AG04450 (cell line): ENCODE measurements at regions of chr7 and their contacts with region 1.

Region 1: DNA sequence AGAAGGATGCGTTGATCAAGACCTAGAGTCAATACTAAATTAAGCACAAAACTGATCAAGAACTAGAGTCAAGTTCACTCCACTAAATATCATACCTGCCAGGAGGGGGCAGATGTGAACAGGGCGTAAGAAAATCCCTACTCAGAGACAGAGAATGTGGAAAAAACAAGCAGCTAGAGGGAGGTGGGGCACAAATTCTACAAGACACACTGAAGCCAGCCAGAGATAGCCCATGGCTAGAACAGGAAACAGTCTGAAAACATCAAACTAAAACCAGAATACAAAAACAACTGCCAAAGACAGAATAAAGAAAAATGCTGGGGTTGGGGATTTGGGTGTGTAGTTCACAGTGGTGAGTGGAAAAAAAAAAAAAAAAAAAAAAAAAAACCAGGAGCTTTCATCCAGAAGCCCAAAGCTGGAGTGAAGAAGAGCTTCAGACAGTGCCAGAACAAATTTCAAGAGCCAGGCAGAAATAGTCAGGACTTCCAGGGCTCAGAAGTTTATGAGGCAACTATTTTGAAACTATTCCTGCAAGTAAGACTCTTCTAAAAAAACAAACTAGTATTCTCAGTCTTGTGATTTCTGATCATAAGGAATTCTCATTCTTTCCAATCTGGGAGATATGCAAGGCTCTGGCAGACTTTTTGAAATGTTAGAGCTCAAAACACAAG is 118.3 kb downstream of the CCDC71L start:
- DNase-seq: peak; percentile 80
- H3K4me3 ChIP-seq: no peak overlapping the region
- H3K27ac ChIP-seq: peak overlapping the region; percentile 79
- H3K27me3 ChIP-seq: no peaks in the 10 kb centered on the region
- CTCF ChIP-seq: peak; percentile 78

Region 2: DNA sequence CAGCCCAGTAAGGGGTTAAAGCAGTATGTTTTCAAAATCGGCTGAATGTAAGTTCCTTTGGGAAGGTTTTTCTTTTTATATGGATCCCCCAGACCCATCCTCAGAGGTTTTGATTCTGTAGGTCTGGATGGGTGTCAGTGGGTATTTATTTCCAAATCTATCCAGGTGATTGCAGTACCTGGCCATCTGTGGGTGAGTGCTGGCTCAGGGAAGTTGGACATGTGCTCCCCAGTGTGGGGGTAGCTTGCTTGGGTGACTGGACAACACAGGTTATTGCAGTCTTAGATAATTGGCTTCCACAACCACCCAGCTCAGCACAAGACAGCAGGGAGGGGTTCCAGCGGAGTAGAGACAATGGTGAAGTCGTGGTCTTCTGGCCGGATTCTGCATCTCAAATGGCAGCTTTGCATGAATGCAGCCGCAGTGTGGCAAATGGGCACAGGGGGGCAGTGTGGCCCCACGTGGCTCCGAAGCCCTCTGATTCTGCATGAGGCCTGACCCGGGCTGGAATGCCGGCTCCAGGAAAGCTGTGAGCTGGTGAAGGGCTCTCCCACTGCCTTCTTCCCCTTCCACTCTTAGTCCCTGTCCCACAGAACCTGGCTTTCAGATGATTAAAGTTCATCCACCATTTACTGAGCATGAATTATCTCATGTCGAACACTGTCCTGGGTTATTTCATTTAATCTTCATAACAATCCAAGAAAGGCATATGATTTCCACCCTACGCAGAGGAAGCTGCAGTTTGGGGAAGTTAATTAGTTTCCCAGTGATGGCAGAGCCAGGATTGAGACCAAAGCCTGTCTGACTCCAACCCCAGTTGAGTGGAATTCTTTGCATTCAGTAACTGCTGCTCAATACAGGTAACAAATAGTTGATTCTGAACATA is 366.0 kb before region 1 on chr7:
- CTCF ChIA-PET with region 1: interaction called, 31 read pairs
- POLR2A ChIA-PET with region 1: no interaction called
- DNase-seq: peak; percentile 46
- H3K4me3 ChIP-seq: no peak overlapping the region
- H3K27ac ChIP-seq: no peak overlapping the region
- H3K27me3 ChIP-seq: peaks cover 4% of the 10 kb centered on the region
- CTCF ChIP-seq: peak; percentile 96

Region 3: DNA sequence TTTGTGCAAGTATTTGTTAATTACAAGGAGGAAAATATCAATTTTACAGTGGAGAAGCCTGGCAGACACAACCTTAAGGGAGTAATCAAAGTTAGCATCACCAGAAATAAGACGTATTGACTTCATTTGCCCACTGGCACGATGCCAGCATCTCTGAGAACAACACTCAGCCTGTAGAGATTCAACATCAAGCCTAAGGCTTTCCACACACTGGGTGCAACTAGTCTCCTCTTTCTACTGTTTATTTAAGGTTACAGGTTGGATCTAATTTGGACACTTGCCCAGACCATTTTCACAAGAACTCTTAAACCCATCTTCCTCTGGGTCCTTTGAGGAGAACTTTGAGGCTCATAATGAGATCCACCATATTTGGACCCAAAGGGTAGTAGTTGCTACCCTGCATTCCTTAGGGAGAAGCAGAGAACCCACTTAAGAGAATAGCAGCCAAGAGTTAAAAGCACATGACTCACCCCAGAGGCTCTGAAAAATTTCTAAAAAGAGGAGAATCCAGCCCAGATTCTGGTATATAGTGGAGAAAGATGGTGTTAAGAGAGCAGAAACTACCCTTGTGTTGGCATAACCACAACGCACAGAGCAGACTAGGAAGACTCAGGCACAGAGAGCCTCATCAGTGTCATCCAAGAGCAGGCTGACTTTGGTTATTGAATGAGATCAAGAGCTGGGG is 20.9 kb after region 1 on chr7:
- CTCF ChIA-PET with region 1: interaction called, 13 read pairs
- POLR2A ChIA-PET with region 1: no interaction called
- DNase-seq: no peak
- H3K4me3 ChIP-seq: no peak overlapping the region
- H3K27ac ChIP-seq: no peak overlapping the region
- H3K27me3 ChIP-seq: no peaks in the 10 kb centered on the region
- CTCF ChIP-seq: no peak

Region 4: DNA sequence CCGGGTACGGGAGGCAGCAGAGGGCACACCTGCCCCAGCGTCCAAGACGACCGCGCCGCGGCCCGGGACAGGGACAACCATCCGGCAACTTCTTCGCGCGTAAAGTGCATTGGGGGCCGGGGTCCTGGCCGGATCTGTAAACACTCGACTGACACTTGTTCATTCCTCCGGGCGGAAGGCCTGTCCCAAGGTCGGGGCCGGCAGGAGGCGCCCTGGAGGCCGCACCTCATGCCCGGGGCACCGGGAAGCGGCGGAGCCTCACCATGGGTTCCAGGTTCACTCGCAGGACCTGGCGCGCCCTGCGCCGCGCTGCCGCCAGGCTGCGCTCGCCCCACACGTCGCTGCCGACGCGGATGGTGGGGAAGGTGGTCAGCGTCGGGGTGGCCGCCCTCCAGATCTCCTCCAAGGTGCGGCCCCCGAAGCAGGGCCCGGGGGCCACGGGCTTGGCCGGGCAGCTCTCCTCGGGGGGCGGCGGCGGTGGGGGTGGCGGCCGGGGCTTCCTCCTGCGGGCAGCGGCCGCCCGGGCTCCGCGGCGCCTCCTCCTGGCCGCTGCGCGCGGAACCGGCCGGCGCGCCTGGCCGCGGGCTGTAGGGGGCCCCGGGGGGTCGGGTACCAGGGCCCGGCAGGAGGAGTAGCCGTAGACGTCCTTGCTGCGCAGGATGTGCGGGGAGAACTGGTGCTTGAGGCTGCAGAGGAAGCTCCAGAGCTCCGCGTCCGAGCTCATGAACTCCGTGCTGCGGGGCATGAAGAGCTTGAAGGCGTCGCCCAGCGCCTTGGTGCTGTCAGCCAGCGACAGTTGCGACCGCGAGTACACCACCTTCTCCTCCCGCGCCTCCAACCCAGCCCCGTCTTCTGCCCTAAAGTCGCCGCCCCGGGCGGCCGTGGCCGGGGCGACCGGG is 117.5 kb after region 1 on chr7:
- CTCF ChIA-PET with region 1: interaction called, 55 read pairs
- POLR2A ChIA-PET with region 1: interaction called, 3 read pairs
- DNase-seq: no peak
- H3K4me3 ChIP-seq: peak overlapping the region; percentile 95
- H3K27ac ChIP-seq: peak overlapping the region; percentile 87
- H3K27me3 ChIP-seq: no peaks in the 10 kb centered on the region
- CTCF ChIP-seq: peak; percentile 78

Region 5: DNA sequence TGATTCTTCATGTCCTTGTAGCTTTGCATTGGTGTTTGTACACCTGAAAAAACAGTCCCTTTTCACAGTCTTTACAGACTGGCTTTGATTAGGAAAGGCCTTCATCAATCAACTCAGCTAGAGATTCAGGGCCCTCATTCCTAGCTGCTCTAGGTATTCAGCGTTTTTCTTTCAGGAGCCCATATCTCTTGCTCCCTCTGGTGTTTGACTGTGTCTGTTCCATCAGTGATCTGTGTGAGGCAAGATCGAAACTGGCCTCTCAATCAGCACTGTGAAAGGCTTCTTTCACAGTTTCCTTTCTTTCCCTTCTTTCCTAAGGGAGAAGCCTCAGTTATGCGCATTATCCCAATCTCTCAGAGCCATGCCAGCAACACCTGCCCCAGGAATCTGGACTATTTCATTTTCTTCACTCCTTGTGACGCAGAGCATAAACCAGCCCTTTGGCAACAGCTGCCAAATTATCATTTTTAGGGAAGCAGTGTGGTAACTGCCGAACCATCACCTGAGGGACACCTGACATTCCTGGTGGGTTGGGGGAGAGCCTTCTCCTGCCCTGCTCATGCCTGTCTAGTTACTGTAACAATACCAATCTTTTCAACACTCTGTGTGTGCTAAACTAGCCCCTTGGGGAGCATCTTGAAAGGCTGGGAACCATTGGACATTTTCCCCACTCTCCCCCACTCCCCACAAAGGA is 194.0 kb after region 1 on chr7:
- CTCF ChIA-PET with region 1: interaction called, 73 read pairs
- POLR2A ChIA-PET with region 1: interaction called, 3 read pairs
- DNase-seq: peak; percentile 56
- H3K4me3 ChIP-seq: no peak overlapping the region
- H3K27ac ChIP-seq: peak overlapping the region; percentile 63
- H3K27me3 ChIP-seq: no peaks in the 10 kb centered on the region
- CTCF ChIP-seq: peak; percentile 82